GM10248 (cell line): ENCODE measurements at regions of chr16 and their contacts with region 1.

Region 1: DNA sequence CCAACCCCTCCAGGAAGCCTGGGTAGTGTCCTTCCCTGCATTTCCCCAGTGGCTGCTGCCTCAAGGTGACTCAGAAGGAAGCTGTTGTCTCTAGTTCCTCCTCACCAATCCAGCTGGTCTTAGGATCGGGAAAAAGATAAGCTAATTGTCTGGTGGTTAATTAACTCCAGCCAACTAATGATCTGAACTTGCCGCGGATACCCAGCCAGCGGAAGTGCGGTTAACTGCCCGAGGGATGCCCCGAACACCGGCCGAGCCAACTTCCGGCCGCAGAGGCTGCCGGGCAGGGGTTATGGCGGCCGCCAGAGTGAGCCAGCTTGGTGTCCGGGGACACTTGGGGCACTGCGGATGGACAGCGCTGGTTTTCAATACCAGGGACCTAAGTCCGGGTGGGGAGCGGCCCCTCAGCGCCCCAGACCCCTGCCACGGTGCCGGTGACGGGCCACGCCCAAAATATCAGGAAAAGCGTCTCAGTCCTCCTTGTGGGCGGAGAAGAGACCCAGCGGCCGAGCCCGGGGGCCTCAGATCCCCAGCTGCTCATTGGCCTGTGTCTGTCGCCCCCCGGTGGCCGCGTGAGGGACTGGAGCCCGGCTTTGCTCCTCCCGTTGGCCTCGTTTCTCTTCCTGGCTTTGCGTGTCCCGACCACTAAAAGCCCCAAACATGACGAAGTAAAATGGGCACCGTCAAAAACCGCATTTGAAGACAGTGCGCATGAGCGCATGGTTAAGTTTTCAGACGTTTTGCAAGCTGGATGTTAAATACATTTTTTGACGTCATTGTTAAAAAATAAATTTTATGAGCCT is 10.2 kb upstream of the PRSS22 start:
- DNase-seq: peak; percentile 98
- CTCF ChIP-seq: peak; percentile 96

Region 2: GRCh38 chr16:2223375-2224182 is 644.6 kb before region 1 on chr16 and contains the start of gene E4F1:
- CTCF ChIA-PET with region 1: no interaction called
- POLR2A ChIA-PET with region 1: no interaction called
- DNase-seq: peak; percentile 100
- CTCF ChIP-seq: no peak

Region 3: DNA sequence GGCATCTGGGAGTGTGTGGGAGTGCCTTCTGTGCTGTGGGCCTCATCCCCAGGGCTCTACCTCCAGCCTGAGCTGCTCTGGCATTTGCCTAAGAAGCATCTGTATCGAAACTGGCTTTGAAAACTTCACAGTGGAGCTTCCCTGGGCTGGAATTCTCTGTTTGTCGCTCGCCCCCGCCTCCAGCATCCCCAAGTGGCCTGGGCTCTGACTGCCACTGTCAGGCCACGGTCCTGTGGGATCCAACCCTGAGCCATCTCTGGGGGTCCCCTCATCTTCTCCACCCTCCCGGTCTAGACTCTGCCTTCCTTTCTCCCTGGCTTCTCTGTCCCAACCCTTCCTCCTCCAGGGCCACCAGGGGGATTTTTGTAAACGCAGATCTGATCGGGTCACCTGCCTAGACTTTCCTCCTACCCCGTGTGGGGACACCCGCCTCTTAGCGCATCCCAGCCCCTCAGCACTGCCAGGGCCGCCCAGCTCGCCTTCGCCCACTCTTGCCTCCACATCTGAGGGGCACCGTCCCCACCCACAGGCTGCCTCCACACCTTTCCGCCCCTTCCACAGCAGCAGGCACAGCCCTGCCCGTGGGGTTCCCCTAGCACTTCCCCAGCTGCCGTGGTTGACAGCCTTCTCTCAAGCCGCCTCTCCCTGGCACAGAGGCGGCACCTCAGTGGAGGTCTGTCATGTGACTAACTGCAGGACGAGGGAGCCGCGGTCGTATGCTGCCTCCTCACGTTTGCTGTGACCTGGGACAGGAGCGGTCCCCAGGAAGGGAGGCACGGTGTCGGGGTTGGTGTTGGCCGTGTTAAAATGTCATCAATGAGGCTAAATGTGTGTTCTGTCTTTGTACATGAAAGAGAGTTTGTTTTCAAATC is 381.3 kb before region 1 on chr16:
- CTCF ChIA-PET with region 1: no interaction called
- POLR2A ChIA-PET with region 1: no interaction called
- DNase-seq: peak; percentile 85
- CTCF ChIP-seq: peak; percentile 64

Region 4: GRCh38 chr16:2777231-2777902 is 90.8 kb before region 1 on chr16 and contains the start of gene ELOB:
- CTCF ChIA-PET with region 1: interaction called, 11 read pairs
- POLR2A ChIA-PET with region 1: no interaction called
- DNase-seq: peak; percentile 97
- CTCF ChIP-seq: no peak

Region 5: GRCh38 chr16:2838928-2839327 is 29.3 kb before region 1 on chr16:
- CTCF ChIA-PET with region 1: interaction called, 22 read pairs
- POLR2A ChIA-PET with region 1: no interaction called
- DNase-seq: peak; percentile 77
- CTCF ChIP-seq: peak; percentile 74

Region 6: GRCh38 chr16:2883027-2883851 is 15.1 kb after region 1 on chr16 and contains the start of gene FLYWCH2:
- CTCF ChIA-PET with region 1: interaction called, 34 read pairs
- POLR2A ChIA-PET with region 1: interaction called, 6 read pairs
- DNase-seq: peak; percentile 97
- CTCF ChIP-seq: no peak

Region 7: GRCh38 chr16:2911580-2912329 is 43.6 kb after region 1 on chr16 and contains the start of gene FLYWCH1:
- CTCF ChIA-PET with region 1: interaction called, 11 read pairs
- POLR2A ChIA-PET with region 1: no interaction called
- DNase-seq: peak; percentile 96
- CTCF ChIP-seq: no peak